Activated CD4-positive, alpha-beta T cell treated with anti-CD3 and anti-CD28 coated beads for 36 hours (primary cell): ENCODE measurements at regions of chr10 and their contacts with region 1.

Region 1: GRCh38 chr10:62732841-62733653 is 71.5 kb upstream of the ADO start:
- DNase-seq: peak; percentile 79
- ATAC-seq: peak; percentile 87
- H3K4me3 Mint-ChIP-seq: peak overlapping the region; percentile 3
- H3K27ac Mint-ChIP-seq: no peak overlapping the region
- H3K4me1 Mint-ChIP-seq: peaks cover 25% of the 10 kb centered on the region
- H3K27me3 Mint-ChIP-seq: peaks cover 5% of the 10 kb centered on the region

Region 2: GRCh38 chr10:62610649-62611229 is 122.3 kb before region 1 on chr10:
- CTCF ChIA-PET with region 1: interaction called, 4 read pairs
- POLR2A ChIA-PET with region 1: no interaction called
- intact Hi-C with region 1: loop called (anchors 1 to 2 kb)
- DNase-seq: peak; percentile 87
- ATAC-seq: peak; percentile 79
- H3K4me3 Mint-ChIP-seq: no peak overlapping the region
- H3K27ac Mint-ChIP-seq: no peak overlapping the region
- H3K4me1 Mint-ChIP-seq: peaks cover 27% of the 10 kb centered on the region
- H3K27me3 Mint-ChIP-seq: peaks cover 14% of the 10 kb centered on the region

Region 3: DNA sequence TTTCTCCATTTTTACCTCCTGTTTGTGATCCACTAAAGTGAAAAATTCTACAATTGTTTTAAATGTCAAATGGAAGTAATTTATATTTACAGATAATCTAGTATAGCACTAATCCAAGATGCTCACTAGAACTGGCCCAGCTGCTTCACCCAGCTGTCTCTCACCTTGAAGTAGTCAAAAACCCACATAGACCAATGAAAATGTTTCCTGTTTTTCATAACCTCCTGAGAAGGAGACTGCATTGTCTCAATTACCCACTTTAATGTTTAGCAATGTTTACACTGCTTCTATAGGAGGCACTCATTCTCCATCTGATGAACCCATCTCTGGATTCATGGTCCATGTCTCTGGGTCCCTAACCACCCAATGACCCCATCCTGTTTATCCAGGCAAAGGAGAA is 15.3 kb after region 1 on chr10:
- CTCF ChIA-PET with region 1: interaction called, 20 read pairs
- POLR2A ChIA-PET with region 1: interaction called, 27 read pairs
- intact Hi-C with region 1: loop called (anchors 1 to 2 kb)
- DNase-seq: no peak
- ATAC-seq: no peak
- H3K4me3 Mint-ChIP-seq: no peak overlapping the region
- H3K27ac Mint-ChIP-seq: peak overlapping the region; percentile 82
- H3K4me1 Mint-ChIP-seq: peaks cover 27% of the 10 kb centered on the region
- H3K27me3 Mint-ChIP-seq: no peaks in the 10 kb centered on the region

Region 4: GRCh38 chr10:62804356-62805230 is 71.5 kb after region 1 on chr10 and contains the start of gene ADO:
- CTCF ChIA-PET with region 1: interaction called, 4 read pairs
- POLR2A ChIA-PET with region 1: no interaction called
- intact Hi-C with region 1: loop called in 1 of 2 experiments (anchors 1 kb)
- DNase-seq: peak; percentile 88
- ATAC-seq: peak; percentile 90
- H3K4me3 Mint-ChIP-seq: peak within 1 kb of the TSS; percentile 83
- H3K27ac Mint-ChIP-seq: peak within 1 kb of the TSS; percentile 99
- H3K4me1 Mint-ChIP-seq: peaks cover 33% of the 10 kb centered on the region
- H3K27me3 Mint-ChIP-seq: no peaks in the 10 kb centered on the region
- total RNA-seq, gene ADO: 21.5 to 23.2 TPM

Region 5: DNA sequence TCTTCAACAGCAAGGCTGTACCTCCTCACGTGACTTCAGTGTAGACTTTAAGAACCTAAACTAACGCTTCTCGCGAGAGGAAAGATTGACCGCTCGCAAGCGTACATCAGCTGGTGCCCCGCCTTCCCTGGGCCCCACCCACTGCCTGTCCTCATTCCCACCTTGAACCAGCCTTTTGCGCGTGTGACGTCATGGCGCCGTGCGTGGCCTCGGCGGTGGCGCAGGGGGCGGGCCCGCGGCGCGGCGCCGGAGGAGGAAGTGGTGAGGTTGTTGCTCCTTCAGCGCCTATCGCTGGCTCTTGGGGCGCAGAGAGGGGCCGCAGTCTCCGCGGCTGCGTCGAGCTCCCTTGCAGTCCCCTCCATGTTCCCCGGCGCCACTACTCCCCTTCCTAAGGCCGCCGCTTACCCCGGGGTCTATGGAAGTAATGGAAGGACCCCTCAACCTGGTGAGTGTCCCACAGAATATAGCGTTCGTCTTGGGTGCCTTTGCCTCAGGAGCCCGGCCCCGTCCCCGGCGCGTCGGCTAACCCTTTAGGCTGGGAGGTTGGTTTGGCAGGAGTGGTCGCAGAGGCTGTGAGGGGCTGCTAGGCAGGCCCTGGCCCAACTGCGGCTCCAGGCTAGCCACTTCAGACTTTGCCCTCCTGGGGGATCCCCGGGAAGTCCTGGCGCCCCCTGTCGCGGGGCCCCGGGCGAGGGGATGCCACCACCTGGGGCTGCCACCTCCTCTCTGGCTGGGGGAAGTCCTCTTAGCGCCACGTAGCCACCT is 400.2 kb after region 1 on chr10 and contains the start of gene NRBF2:
- CTCF ChIA-PET with region 1: no interaction called
- POLR2A ChIA-PET with region 1: interaction called, 3 read pairs
- intact Hi-C with region 1: loop called in 1 of 2 experiments (anchors 1 kb)
- DNase-seq: peak; percentile 99
- ATAC-seq: peak; percentile 90
- H3K4me3 Mint-ChIP-seq: peak within 1 kb of the TSS; percentile 81
- H3K27ac Mint-ChIP-seq: peak within 1 kb of the TSS; percentile 92
- H3K4me1 Mint-ChIP-seq: peaks cover 46% of the 10 kb centered on the region
- H3K27me3 Mint-ChIP-seq: no peaks in the 10 kb centered on the region
- total RNA-seq, gene NRBF2: 23.9 to 24.1 TPM